Activated naive CD4-positive, alpha-beta T cell treated with anti-CD3 and anti-CD28 coated beads, Interleukin-2, amount 10 ng/mL, durations not matched to agents 7 days and 5 days (primary cell): ENCODE measurements at regions of chr15 and their contacts with region 1.

Region 1: GRCh38 chr15:84600851-84601838 is at the start of gene ZSCAN2:
- DNase-seq: peak; percentile 97
- H3K4me3 Mint-ChIP-seq: peak within 1 kb of the TSS; percentile 83
- H3K27ac Mint-ChIP-seq: peak within 1 kb of the TSS; percentile 82
- H3K4me1 Mint-ChIP-seq: peaks cover 59% of the 10 kb centered on the region
- H3K27me3 Mint-ChIP-seq: no peaks in the 10 kb centered on the region

Region 2: DNA sequence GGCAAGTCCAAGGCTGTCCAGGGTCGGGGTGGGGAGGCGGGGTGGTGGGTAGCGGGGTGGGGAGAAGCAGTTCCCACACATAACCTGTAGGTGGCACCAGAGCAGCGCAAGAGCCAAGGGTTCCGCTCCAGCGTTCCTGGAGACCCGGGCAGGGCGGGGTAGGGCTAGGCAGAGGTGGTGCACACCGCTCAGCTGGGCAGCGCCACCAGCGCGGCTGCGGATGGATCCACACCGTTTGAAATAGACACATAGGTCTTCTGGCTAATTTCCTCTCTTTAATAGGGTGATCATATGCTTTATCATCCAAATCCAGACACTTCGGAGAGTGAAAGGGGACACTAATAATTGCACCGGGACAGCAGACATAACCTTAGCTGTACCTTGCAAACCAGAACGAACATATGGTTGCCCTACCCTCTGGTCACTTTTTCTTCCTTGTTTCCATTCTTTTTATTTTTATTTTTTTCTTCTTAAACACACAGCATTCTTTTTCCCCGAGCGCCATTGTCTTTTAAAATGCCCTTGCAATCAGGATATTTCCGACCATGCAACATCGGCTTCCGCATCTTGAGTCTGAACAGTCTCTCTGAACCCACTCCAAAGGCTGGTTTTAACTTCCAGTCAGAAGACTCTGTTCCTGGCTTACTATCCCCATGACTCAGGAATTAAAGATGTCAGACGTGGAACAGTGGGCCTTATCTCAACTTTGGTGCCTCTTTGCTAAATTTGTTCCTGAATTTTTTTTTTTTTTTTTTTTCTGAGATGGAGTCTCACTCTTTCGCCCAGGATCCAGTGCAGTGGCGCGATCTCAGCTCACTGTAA is 12.9 kb before region 1 on chr15:
- CTCF ChIA-PET with region 1: interaction called, 32 read pairs
- DNase-seq: peak; percentile 90
- H3K4me3 Mint-ChIP-seq: peak overlapping the region; percentile 31
- H3K27ac Mint-ChIP-seq: no peak overlapping the region
- H3K4me1 Mint-ChIP-seq: peaks cover 8% of the 10 kb centered on the region
- H3K27me3 Mint-ChIP-seq: peaks cover 23% of the 10 kb centered on the region

Region 3: DNA sequence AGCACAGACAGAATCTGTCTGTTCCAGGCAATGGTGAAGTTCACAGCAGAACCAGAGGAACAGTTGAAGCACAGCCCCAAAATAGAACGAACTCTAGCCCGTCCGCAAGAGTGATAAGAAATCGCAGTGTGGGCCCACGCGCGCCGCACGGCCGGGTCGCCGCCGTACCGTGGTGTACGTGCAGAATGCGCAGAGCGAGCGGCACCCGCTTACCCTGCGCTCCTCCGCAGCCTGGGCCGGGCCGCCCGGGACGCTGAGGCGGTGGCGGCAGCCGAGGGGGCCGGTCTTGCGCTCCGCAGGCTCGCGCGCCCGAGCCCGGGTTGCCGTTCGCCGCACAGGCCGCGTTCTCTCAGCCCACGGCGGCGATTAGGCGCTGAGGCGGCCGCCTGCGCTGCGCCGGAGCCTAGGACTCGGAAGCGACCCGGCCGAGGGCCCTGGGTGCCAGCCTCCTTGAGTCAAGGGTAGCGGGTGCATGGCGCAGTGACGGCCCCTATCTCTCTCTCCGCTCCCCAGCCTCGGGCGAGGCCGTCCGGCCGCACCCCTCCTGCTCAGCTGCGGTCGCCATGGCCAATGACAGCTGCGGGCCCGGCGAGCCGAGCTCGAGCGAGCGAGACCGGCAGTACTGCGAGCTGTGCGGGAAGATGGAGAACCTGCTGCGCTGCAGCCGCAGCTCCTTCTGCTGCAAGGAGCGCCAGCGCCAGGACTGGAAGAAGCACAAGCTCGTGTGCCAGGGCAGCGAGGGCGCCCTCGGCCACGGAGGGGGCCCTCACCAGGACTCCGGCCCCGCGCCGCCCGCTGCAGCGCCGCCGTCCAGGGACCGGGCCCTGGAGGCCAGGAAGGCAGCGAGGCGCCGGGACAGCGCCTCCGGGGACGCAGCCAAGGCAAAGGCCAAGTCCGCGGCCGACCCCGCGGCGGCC is 32.4 kb after region 1 on chr15:
- CTCF ChIA-PET with region 1: interaction called, 54 read pairs
- DNase-seq: peak; percentile 79
- H3K4me3 Mint-ChIP-seq: peak overlapping the region; percentile 90
- H3K27ac Mint-ChIP-seq: peak overlapping the region; percentile 98
- H3K4me1 Mint-ChIP-seq: peaks cover 55% of the 10 kb centered on the region
- H3K27me3 Mint-ChIP-seq: no peaks in the 10 kb centered on the region

Region 4: DNA sequence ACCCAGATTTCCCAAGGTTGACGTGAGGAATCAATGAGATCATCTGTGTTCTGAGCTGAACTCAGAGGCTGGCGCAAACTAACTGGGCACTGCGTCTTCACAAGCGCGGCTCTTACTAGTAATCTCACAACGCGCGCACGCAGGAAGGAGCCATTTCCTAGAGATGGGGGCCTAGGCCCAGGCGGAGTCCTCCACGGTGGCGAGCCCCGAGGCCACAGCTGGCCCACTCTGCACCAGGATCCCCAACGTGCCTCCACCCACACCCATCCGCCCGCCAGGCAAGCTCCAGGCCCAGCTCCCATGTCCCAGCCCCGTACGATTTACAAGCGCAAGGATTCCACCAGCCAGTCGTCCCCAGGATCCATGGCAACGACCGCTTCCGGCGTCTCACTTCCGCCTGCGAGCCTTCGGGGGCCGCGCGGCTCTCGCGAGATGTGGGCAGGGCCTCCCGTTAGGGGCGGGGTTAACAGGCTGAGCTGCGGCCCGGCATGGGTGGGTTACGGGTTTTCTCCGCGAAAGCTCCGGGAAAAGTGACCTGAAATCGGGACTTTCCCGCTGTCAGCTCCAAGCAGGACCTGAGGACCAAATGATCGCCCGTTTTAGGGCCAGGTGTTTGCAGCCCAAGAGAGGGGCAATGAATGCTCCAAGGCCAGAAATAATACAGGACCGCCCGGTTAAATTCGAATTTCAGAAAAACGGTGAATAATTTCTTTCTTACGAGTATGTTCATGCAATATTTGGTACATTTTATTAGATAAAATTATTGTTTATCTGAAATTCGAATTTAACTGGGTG is 53.0 kb after region 1 on chr15 and contains the start of gene WDR73:
- CTCF ChIA-PET with region 1: interaction called, 36 read pairs
- DNase-seq: peak; percentile 98
- H3K4me3 Mint-ChIP-seq: peak within 1 kb of the TSS; percentile 99
- H3K27ac Mint-ChIP-seq: peak within 1 kb of the TSS; percentile 85
- H3K4me1 Mint-ChIP-seq: peaks cover 52% of the 10 kb centered on the region
- H3K27me3 Mint-ChIP-seq: peaks cover 12% of the 10 kb centered on the region

Region 5: DNA sequence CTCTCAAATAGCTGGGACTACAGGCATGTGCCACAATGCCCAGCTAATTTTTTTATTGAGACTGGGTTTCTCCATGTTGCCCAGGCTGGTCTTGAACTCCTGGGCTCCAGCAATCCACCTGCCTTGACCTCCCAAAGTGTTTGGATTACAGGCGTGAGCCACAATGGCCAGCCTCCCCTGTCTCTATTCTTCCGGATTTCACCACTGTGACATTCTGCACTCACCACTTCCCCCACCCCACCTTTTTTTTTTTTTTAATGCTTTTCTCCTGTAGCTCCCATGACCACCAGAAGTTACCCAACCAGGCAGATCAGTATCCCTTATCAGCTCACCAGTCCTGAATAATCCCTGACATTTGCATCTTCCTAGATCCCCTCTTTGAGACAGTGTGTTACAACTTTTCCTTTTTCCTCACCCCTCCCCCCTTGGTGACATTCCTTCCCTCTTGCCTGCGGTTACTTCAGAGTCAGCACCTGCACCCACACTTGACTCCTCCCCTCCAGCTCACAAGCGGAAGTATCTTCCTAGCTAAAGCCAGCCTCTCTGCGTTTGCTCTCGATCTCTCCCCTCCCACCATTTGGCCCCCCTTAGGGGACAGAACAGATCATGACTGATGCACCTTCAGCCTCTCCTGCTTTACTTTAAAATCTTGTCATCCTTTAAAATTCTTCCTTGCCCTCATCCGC is 133.8 kb after region 1 on chr15:
- CTCF ChIA-PET with region 1: no interaction called
- DNase-seq: peak; percentile 86
- H3K4me3 Mint-ChIP-seq: peak overlapping the region; percentile 64
- H3K27ac Mint-ChIP-seq: peak overlapping the region; percentile 94
- H3K4me1 Mint-ChIP-seq: peaks cover 65% of the 10 kb centered on the region
- H3K27me3 Mint-ChIP-seq: no peaks in the 10 kb centered on the region

Region 6: GRCh38 chr15:84871428-84872305 is 270.5 kb after region 1 on chr15:
- CTCF ChIA-PET with region 1: interaction called, 13 read pairs
- DNase-seq: no peak
- H3K4me3 Mint-ChIP-seq: no peak overlapping the region
- H3K27ac Mint-ChIP-seq: no peak overlapping the region
- H3K4me1 Mint-ChIP-seq: no peaks in the 10 kb centered on the region
- H3K27me3 Mint-ChIP-seq: no peaks in the 10 kb centered on the region

Region 7: DNA sequence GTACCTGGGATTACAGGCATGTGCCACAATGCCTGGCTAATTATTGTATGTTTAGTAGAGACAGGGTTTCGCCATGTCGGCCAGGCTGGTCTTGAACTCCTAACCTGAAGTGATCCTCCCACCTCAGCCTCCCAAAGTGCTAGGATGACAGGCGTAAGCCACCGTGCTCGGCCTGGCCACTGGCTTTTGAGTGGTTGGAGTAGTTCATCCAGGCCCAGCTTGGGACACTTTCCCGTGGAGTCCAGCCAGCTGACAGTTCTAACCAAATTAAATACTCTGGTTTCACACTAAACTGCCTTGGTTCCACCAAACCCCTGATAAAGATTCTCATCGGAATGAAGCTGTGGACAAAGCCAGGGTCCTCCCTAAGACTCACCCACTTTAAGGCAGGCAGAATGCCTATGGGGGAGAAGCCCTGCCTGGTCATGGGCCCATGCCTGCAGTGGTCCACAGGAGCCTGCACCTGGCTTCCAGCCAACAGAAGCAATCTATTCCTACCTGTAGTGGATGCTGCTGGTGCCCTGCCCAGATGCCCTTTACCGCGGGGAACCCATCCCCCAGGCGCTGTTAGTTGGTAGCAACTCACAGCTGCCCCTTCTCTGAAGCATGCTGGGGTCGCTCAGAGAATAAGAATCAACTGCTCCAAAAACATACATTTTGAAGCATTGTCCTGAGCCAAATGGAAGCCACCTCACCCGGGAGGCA is 278.1 kb after region 1 on chr15:
- CTCF ChIA-PET with region 1: interaction called, 15 read pairs
- DNase-seq: no peak
- H3K4me3 Mint-ChIP-seq: no peak overlapping the region
- H3K27ac Mint-ChIP-seq: no peak overlapping the region
- H3K4me1 Mint-ChIP-seq: peaks cover 4% of the 10 kb centered on the region
- H3K27me3 Mint-ChIP-seq: peaks cover 5% of the 10 kb centered on the region

Region 8: GRCh38 chr15:84929744-84930371 is 328.7 kb after region 1 on chr15:
- CTCF ChIA-PET with region 1: interaction called, 28 read pairs
- DNase-seq: no peak
- H3K4me3 Mint-ChIP-seq: no peak overlapping the region
- H3K27ac Mint-ChIP-seq: no peak overlapping the region
- H3K4me1 Mint-ChIP-seq: peaks cover 5% of the 10 kb centered on the region
- H3K27me3 Mint-ChIP-seq: peaks cover 11% of the 10 kb centered on the region

Region 9: GRCh38 chr15:84955089-84955848 is 354.1 kb after region 1 on chr15:
- CTCF ChIA-PET with region 1: no interaction called
- DNase-seq: peak; percentile 48
- H3K4me3 Mint-ChIP-seq: no peak overlapping the region
- H3K27ac Mint-ChIP-seq: no peak overlapping the region
- H3K4me1 Mint-ChIP-seq: peaks cover 4% of the 10 kb centered on the region
- H3K27me3 Mint-ChIP-seq: peaks cover 44% of the 10 kb centered on the region